HCT116 (cell line): ENCODE measurements at regions of chr17 and their contacts with region 1.

Region 1: GRCh38 chr17:50151041-50151936 is 812 bp upstream of the PPP1R9B start:
- DNase-seq: peak; percentile 85
- ATAC-seq: peak; percentile 67
- H3K4me3 ChIP-seq: peak overlapping the region; percentile 76 to 97
- H3K27ac ChIP-seq: peak overlapping the region; percentile 89
- H3K4me1 ChIP-seq: peaks cover 43 to 69% of the 10 kb centered on the region in 2 experiments
- H3K27me3 ChIP-seq: no peaks in the 10 kb centered on the region
- CTCF ChIP-seq: peak in 2 of 3 experiments; percentile 54 to 78; a peak in 4 of 6 replicates
- POLR2A ChIP-seq: peak; percentile 20
- RAD21 ChIP-seq: no peak

Region 2: GRCh38 chr17:50101346-50102163 is 49.7 kb before region 1 on chr17:
- CTCF ChIA-PET with region 1: no interaction called
- POLR2A ChIA-PET with region 1: no interaction called
- RAD21 ChIA-PET with region 1: no interaction called
- intact Hi-C with region 1: no loop called
- DNase-seq: no peak
- ATAC-seq: peak; percentile 38
- H3K4me3 ChIP-seq: no peak overlapping the region
- H3K27ac ChIP-seq: peak overlapping the region; percentile 47; the same call in 1 of the 2 replicates
- H3K4me1 ChIP-seq: peaks cover 32 to 33% of the 10 kb centered on the region in 2 experiments
- H3K27me3 ChIP-seq: no peaks in the 10 kb centered on the region
- CTCF ChIP-seq: no peak
- POLR2A ChIP-seq: no peak
- RAD21 ChIP-seq: no peak

Region 3: DNA sequence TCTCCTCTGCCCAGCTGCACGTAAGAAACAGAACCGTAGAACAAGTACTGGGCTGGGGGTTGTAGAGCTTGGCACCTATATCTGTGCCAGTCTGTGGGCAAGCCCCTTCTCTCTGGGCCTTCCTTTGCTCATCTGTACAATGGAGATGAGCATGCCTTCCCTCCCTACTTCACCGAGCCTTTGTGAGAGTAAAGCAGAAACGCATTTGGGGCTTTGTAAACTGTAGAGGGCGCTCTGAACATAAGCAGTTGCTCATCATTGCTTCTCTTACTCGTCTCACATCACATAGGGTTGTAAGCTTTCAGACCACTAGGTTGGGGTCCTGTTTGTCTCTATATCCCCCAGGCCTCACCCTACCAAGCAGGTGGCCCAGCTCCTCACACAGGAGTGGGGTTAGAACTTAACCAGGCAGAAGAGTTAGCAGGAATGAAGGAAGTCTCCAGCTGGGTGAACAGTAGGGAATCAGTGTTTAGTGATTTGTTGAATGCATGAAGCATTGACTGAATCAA is 36.4 kb before region 1 on chr17:
- CTCF ChIA-PET with region 1: interaction called, 14 read pairs
- POLR2A ChIA-PET with region 1: interaction called, 3 read pairs
- RAD21 ChIA-PET with region 1: no interaction called
- intact Hi-C with region 1: no loop called
- DNase-seq: peak; percentile 66
- ATAC-seq: peak; percentile 51
- H3K4me3 ChIP-seq: no peak overlapping the region
- H3K27ac ChIP-seq: no peak overlapping the region
- H3K4me1 ChIP-seq: peaks cover 7 to 22% of the 10 kb centered on the region in 2 experiments; a peak in 3 of 4 replicates
- H3K27me3 ChIP-seq: peaks cover 6% of the 10 kb centered on the region; the same call in 1 of the 2 replicates
- CTCF ChIP-seq: peak; percentile 88 to 98 (median 92)
- POLR2A ChIP-seq: no peak
- RAD21 ChIP-seq: no peak; the same call in 1 of the 2 replicates

Region 4: GRCh38 chr17:50169121-50169764 is 18.0 kb after region 1 on chr17:
- CTCF ChIA-PET with region 1: interaction called, 21 read pairs
- POLR2A ChIA-PET with region 1: interaction called, 9 read pairs
- RAD21 ChIA-PET with region 1: interaction called, 3 to 5 read pairs
- intact Hi-C with region 1: no loop called
- DNase-seq: peak; percentile 78
- ATAC-seq: peak; percentile 77
- H3K4me3 ChIP-seq: peak overlapping the region; percentile 19 to 27; a peak in 3 of 4 replicates
- H3K27ac ChIP-seq: no peak overlapping the region
- H3K4me1 ChIP-seq: peaks cover 9 to 46% of the 10 kb centered on the region in 2 experiments
- H3K27me3 ChIP-seq: no peaks in the 10 kb centered on the region
- CTCF ChIP-seq: peak; percentile 97 to 100 (median 98)
- POLR2A ChIP-seq: no peak
- RAD21 ChIP-seq: peak; percentile 99

Region 5: DNA sequence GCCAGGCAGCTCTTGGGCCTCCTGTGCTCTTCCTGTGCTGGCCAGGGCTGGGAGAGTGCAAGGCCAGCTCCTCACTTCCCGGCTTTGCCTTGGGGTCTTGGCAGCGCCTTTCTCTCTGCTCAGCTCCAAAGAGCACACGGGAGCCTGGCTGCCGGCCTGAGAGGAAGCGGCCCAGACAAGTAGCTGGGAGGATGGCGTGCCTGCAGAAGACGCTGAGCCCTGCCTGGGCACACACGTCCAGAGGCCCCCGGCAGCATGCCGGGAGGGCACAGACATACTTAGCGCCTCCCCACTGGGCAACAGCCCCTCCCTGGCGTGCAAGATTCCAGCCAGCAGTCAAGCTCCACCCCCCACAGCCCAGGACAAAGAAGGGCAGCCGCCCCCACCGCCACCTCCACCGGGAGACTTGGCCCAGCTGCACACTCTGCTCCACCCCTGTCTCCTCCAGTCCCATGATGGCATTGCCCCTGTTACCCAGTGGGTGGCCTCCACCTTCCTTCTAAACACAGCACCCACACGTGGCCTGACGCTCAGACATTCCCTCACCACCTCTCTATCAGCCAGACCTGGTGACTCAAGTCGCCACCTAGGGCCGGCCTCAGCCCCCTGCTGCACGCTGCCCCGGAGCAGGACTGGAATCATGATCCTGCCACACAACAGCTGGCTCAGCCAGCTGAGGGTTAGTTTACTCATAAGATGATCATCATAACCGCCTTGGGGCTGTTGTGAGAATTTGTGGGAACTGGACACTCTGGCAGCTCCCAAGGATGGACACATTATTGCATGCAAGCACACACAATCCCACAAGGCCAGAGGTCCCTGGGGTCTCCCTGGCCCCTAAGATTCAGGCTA is 26.9 kb after region 1 on chr17:
- CTCF ChIA-PET with region 1: interaction called, 3 read pairs
- POLR2A ChIA-PET with region 1: interaction called, 17 read pairs
- RAD21 ChIA-PET with region 1: interaction called in 1 of 2 experiments, 7 read pairs
- intact Hi-C with region 1: no loop called
- DNase-seq: peak; percentile 90
- ATAC-seq: peak; percentile 94
- H3K4me3 ChIP-seq: peak overlapping the region; percentile 22 to 43
- H3K27ac ChIP-seq: peak overlapping the region; percentile 61
- H3K4me1 ChIP-seq: peaks cover 41 to 56% of the 10 kb centered on the region in 2 experiments
- H3K27me3 ChIP-seq: no peaks in the 10 kb centered on the region
- CTCF ChIP-seq: peak; percentile 80 to 96 (median 82)
- POLR2A ChIP-seq: no peak
- RAD21 ChIP-seq: peak; percentile 72

Region 6: DNA sequence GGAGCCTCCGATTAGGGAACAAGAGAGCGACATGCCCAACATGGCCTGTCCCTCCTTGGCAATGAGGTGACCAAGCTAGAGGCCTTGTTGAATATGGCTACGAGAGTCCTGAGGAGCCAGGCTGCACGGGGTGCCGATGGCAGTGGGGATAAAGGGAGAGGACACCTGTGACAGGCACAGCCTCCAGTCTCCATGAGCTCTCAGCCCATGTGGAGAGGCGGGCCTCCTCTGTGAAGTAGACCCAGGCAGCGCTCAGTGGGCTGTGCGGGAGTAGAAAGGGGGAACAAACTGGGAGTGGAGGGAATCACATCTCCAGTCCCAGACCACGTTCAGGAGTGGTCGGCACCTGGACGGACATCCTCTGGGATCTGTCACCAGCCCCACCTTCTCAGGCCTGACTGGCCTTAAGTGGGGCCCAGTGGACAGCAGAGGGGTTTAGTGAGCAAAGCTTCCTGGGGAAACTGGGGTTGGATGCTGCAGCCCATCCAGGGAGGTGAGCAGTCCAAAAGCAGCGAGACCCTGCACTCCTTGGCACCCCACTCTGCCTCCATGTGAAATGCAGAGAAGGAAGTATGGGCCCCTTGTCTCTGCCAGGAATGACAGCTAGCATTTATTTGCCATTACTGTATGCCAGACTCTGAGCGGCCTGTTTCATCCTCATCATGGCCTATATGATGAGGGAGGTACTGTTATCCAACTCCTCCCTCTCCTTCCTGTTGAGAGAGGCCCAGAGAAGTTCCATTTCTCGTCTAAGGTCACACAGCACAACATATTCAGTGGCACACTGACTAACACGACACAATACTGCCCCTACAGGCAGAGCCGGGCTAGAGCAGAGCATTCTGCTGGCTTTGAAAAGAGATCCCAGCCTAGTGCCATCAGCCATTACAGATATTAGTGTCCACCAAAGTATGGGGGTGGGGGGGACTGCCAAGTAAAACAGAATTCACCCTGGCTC is 118.5 kb after region 1 on chr17:
- CTCF ChIA-PET with region 1: interaction called, 10 read pairs
- POLR2A ChIA-PET with region 1: no interaction called
- RAD21 ChIA-PET with region 1: no interaction called
- intact Hi-C with region 1: no loop called
- DNase-seq: peak; percentile 60
- ATAC-seq: peak; percentile 67
- H3K4me3 ChIP-seq: no peak overlapping the region
- H3K27ac ChIP-seq: no peak overlapping the region
- H3K4me1 ChIP-seq: peaks cover 38 to 46% of the 10 kb centered on the region in 2 experiments
- H3K27me3 ChIP-seq: no peaks in the 10 kb centered on the region
- CTCF ChIP-seq: peak; percentile 92 to 98 (median 98)
- POLR2A ChIP-seq: no peak
- RAD21 ChIP-seq: peak; percentile 84

Region 7: DNA sequence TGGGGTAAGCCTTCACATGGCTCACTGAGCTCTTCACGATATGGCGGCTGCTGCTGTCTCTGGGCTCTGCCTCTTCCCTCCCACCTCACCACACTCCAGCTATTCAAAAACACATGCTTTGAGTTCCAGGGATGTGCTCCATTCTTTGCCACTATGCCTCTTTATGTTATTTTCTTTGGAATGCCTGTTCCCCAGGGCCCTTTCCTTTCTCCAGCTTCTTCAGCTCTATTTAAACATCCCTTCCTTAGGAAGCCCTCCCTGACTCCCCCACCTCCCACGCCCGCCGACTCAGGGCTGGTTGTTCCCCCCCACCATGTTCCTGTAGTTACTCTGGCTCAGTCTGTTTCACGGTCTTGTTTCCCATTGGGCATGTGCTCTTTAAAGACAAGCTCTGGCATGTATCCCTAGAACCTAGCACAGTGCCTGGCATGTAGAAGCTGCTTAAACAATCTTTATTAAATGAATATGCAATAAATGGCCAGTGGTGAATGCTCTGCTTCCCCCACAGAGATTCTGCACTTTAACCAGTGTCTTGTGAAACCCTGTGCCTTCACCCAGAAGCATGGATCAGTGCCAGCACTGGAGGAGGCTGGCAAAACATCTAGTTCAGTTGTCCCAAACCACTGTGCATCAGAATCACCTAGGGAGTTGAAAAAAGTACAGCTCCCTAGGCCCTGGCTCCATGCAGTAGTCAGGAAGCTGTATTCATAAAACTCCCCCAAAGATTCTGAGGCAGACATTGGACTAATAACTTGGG is 363.8 kb after region 1 on chr17:
- CTCF ChIA-PET with region 1: no interaction called
- POLR2A ChIA-PET with region 1: no interaction called
- RAD21 ChIA-PET with region 1: no interaction called
- intact Hi-C with region 1: no loop called
- DNase-seq: no peak
- ATAC-seq: no peak
- H3K4me3 ChIP-seq: no peak overlapping the region
- H3K27ac ChIP-seq: no peak overlapping the region
- H3K4me1 ChIP-seq: peaks cover 0 to 17% of the 10 kb centered on the region in 2 experiments; a peak in 2 of 4 replicates
- H3K27me3 ChIP-seq: no peaks in the 10 kb centered on the region
- CTCF ChIP-seq: no peak
- POLR2A ChIP-seq: no peak
- RAD21 ChIP-seq: no peak